Mammary epithelial cell (primary cell): ENCODE measurements at regions of chr12 and their contacts with region 1.

Region 1: GRCh38 chr12:109995686-109996482 is at the start of gene GIT2:
- DNase-seq: peak; percentile 86
- H3K4me3 ChIP-seq: peak within 1 kb of the TSS; percentile 72 to 83 (median 73)
- H3K27ac ChIP-seq: peak within 1 kb of the TSS; percentile 35
- H3K4me1 ChIP-seq: peaks cover 23% of the 10 kb centered on the region
- H3K27me3 ChIP-seq: no peaks in the 10 kb centered on the region
- CTCF ChIP-seq: peak in 1 of 2 donors; percentile 2
- total RNA-seq, gene GIT2: 26.8 to 30.8 TPM

Region 2: GRCh38 chr12:109934026-109934425 is 61.9 kb before region 1 on chr12:
- CTCF ChIA-PET with region 1: no interaction called
- dilution Hi-C with region 1: loop called (anchors 5 kb)
- in situ Hi-C with region 1: no loop called
- intact Hi-C with region 1: no loop called
- DNase-seq: no peak
- H3K4me3 ChIP-seq: no peak overlapping the region
- H3K27ac ChIP-seq: no peak overlapping the region
- H3K4me1 ChIP-seq: no peaks in the 10 kb centered on the region
- H3K27me3 ChIP-seq: no peaks in the 10 kb centered on the region
- CTCF ChIP-seq: peak; percentile 9 to 20

Region 3: DNA sequence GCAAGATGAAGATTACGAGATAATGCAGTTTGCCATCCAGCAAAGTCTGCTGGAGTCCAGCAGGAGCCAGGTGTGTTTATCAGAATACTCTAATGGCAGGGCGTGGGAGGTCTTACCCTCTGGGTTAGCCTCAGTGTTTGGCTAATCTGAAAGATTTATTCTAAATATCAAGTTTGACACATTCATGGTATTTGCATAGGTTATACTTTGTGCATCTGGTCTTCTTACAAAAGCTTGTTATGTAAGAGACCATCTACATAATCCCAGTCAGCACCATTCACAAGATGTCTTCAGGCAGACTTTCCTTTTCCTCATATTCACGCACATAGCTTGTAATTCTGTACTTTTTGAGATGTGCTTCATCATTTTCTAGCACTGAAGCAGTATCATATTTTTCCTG is 38.0 kb after region 1 on chr12:
- CTCF ChIA-PET with region 1: no interaction called
- dilution Hi-C with region 1: loop called (anchors 5 kb)
- in situ Hi-C with region 1: no loop called
- intact Hi-C with region 1: loop called (anchors 5 kb)
- DNase-seq: no peak
- H3K4me3 ChIP-seq: no peak overlapping the region
- H3K27ac ChIP-seq: no peak overlapping the region
- H3K4me1 ChIP-seq: peaks cover 6% of the 10 kb centered on the region
- H3K27me3 ChIP-seq: no peaks in the 10 kb centered on the region
- CTCF ChIP-seq: no peak

Region 4: DNA sequence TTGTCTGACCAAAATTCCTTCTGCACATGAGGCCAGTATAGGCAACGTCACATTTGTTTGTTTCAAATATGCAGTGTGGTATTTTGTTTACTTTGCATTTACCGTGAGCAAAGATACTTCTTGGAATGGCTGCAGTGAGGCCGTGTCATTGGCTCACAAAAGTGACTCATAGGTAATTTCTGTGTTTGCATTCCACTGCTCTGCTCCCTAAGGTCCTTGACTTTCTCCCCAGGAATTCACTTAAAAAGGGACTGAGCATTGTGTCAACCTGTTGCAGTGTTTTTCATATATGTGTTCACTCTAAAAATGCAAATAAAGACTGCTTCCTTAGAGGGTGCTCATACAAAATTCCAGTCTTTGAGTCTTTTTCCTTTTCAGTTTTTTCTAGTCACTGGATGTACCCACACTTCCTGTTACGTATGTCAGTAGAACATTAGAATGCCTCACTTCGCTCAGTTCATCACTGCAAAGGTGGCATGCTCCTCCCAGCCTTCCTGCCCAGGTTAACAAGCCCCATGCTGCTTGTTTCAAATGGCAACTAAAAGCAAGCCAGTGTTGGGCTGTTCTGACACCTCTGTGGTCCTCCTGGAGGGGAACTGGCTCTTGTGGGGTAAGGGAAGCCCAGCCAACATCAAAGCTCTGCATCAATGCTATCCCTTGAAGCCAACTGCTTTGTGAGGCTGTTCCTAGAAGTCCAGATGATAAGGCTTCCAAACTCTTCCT is 43.4 kb after region 1 on chr12:
- CTCF ChIA-PET with region 1: no interaction called
- dilution Hi-C with region 1: loop called (anchors 5 kb)
- in situ Hi-C with region 1: no loop called
- intact Hi-C with region 1: loop called (anchors 5 kb)
- DNase-seq: peak; percentile 76
- H3K4me3 ChIP-seq: no peak overlapping the region
- H3K27ac ChIP-seq: peak overlapping the region; percentile 28
- H3K4me1 ChIP-seq: peaks cover 16% of the 10 kb centered on the region
- H3K27me3 ChIP-seq: no peaks in the 10 kb centered on the region
- CTCF ChIP-seq: no peak